ENCODE measurements at regions of chr13 and their contacts with region 1.

Region 1: DNA sequence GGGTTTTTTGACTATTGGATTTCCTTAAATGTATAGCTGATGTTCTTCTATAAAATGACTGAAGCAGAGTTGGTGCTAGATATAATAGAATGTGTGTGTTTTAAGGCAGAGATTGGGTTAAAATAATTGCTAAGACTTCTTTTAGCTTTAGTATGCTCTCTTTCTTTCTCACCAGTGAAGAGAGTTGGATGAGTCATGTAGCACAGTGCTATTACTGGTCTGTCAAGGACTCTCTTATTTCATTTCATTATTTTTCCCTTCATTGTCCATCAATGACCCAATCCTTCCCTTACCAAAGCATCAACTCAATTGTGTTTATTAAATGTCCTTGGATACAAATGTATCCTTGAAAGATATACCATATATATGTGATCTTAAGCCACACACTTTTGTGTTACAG is 268.9 kb downstream of the IRS2 start:
- DNase-seq: no peak
- H3K4me3 Mint-ChIP-seq: no peak overlapping the region
- H3K27ac Mint-ChIP-seq: no peak overlapping the region
- H3K4me1 Mint-ChIP-seq: no peaks in the 10 kb centered on the region
- H3K27me3 Mint-ChIP-seq: peaks cover 2% of the 10 kb centered on the region

Region 2: GRCh38 chr13:109476001-109476400 is 41.5 kb before region 1 on chr13:
- CTCF ChIA-PET with region 1: no interaction called
- POLR2A ChIA-PET with region 1: no interaction called
- intact Hi-C with region 1: no loop called
- DNase-seq: no peak
- H3K4me3 Mint-ChIP-seq: no peak overlapping the region
- H3K27ac Mint-ChIP-seq: no peak overlapping the region
- H3K4me1 Mint-ChIP-seq: no peaks in the 10 kb centered on the region
- H3K27me3 Mint-ChIP-seq: peaks cover 2% of the 10 kb centered on the region

Region 3: DNA sequence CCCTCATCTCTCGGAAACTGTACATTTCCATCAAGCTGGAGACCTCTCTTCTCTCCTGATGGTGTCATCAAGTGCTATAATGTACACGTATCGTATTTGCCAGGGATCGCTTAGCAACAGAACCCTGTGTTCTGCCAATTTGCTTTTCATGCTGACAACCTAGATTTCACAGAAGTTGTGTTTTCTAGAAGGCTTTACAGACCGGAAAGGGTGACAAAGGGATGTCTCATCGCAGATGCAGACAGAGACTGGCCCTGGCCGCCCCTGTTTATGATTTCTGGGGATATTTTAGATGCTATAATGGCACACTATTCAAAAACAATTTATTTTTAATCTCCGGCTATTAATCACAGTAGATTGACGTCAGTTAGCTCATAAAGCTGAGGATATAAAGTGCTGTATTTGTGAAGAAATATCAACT is 22.6 kb before region 1 on chr13:
- CTCF ChIA-PET with region 1: no interaction called
- POLR2A ChIA-PET with region 1: no interaction called
- intact Hi-C with region 1: loop called (anchors 1 kb)
- DNase-seq: no peak
- H3K4me3 Mint-ChIP-seq: no peak overlapping the region
- H3K27ac Mint-ChIP-seq: no peak overlapping the region
- H3K4me1 Mint-ChIP-seq: no peaks in the 10 kb centered on the region
- H3K27me3 Mint-ChIP-seq: no peaks in the 10 kb centered on the region